Caco-2 (cell line): ENCODE measurements at regions of chr17 and their contacts with region 1.

Region 1: GRCh38 chr17:28717578-28718333 is at the start of gene RAB34:
- DNase-seq: peak in 1 of 2 experiments; percentile 58
- H3K4me3 ChIP-seq: no peak within 1 kb of the TSS
- H3K4me3 Mint-ChIP-seq: peak within 1 kb of the TSS; percentile 94
- H3K27ac Mint-ChIP-seq: peak within 1 kb of the TSS; percentile 98
- H3K4me1 ChIP-seq: peaks cover 19% of the 10 kb centered on the region
- H3K4me1 Mint-ChIP-seq: peaks cover 18% of the 10 kb centered on the region
- H3K27me3 ChIP-seq: no peaks in the 10 kb centered on the region
- H3K27me3 Mint-ChIP-seq: no peaks in the 10 kb centered on the region
- CTCF ChIP-seq: no peak
- total RNA-seq, gene RAB34: 1.2 and 1.8 TPM in 2 replicates

Region 2: DNA sequence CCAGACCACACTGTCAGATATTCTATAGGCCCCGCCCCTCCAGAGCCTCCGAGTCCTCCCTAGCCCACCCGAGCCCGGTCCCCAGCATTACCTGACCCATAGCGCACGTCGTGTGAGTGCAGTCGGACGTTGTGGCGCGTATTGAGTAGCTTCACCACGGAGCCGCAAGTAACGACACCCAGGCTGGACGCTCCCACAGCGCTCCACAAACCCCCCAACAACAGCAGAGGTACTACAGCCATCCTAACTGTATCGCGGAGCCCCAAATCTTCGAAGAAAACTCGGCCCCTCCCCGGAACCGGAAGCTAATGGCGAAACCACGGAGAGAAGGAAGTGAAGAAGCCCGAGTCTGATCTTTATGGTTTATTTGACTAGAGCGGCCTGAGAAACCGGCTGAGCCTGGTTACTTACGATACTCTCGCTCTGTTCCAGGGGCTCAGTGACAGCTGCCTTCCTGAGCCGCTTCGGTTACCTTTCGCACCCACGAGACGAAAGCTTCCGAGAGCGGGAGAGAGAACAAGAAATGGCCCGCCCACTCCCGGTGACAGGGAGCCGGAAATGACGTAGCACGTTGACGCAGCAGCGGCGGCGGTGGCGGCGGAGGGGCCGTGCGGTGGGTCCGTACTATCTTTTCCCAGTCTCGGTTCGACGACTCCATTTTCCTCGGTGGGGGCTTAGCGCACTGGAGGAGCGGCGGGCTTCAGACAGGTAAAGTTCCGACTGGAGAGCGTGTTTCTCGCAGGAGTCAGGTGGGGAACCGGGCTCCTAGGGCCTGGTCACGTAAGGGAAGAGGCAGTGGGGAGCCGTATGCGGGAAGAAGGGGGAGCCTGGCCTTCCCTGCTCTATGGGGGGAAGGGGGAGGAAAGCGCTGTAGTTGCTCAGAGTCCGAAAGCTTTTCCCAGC is 55.9 kb before region 1 on chr17 and contains the starts of genes SDF2 and SUPT6H:
- CTCF ChIA-PET with region 1: interaction called, 5 read pairs
- POLR2A ChIA-PET with region 1: interaction called, 27 read pairs
- intact Hi-C with region 1: no loop called
- DNase-seq: peak; percentile 91 to 94
- H3K4me3 ChIP-seq: peak within 1 kb of the TSS; percentile 80
- H3K4me3 Mint-ChIP-seq: peak within 1 kb of the TSS; percentile 89
- H3K27ac Mint-ChIP-seq: peak within 1 kb of the TSS; percentile 95
- H3K4me1 ChIP-seq: peaks cover 14% of the 10 kb centered on the region; the same call in 1 of the 2 replicates
- H3K4me1 Mint-ChIP-seq: peaks cover 31% of the 10 kb centered on the region
- H3K27me3 ChIP-seq: no peaks in the 10 kb centered on the region
- H3K27me3 Mint-ChIP-seq: no peaks in the 10 kb centered on the region
- CTCF ChIP-seq: no peak
- total RNA-seq, gene SDF2: 63.5 and 64.9 TPM in 2 replicates
- total RNA-seq, gene SUPT6H: 127 and 129 TPM in 2 replicates

Region 3: DNA sequence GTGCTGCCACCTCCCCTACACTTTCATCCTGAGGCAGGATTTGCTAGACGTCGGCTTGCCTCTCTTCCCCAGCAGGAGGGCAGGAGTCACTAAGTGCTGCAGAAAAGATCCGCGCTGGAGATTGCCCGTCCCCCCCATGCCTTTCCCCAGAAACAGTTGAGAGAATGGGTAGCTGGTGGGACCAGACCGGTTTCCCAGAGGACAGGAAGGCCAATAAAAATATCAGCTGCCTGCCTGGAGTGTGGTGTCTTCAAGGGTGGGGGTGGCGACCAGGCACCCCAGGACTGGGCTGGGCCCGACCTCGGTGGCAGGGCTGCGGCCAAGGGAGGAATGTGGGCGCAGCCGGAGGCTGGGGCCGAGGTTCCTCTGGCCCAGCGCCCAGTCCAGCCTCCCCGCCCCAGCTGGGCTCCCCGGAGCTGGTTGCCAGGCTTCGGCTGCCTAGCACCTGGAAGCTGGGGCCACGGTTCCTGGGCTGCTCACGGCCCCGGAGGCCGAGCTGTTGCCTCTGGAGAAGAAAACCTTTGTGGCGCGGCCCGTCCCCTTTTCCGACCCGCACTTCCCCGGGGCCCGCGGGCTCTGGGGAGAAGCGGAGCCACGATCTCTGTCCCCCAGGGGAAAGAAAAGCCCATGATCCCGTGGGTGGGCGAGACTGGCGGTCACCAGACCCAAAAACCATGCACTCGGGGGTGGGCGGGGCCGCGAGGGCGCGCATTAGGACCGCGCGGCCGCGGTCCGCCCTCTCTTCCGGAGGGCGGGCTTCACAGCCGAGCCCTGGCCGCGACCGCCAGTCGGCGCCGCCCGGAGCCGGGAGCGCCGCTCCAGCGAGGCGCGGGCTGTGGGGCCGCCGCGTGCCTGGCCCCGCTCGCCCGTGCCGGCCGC is 25.7 kb after region 1 on chr17 and contains the start of gene TRAF4:
- CTCF ChIA-PET with region 1: interaction called, 5 read pairs
- POLR2A ChIA-PET with region 1: interaction called, 52 read pairs
- intact Hi-C with region 1: no loop called
- DNase-seq: peak; percentile 83 to 91
- H3K4me3 ChIP-seq: peak within 1 kb of the TSS; percentile 68
- H3K4me3 Mint-ChIP-seq: peak within 1 kb of the TSS; percentile 95
- H3K27ac Mint-ChIP-seq: peak within 1 kb of the TSS; percentile 96
- H3K4me1 ChIP-seq: peaks cover 40% of the 10 kb centered on the region
- H3K4me1 Mint-ChIP-seq: peaks cover 12% of the 10 kb centered on the region
- H3K27me3 ChIP-seq: no peaks in the 10 kb centered on the region
- H3K27me3 Mint-ChIP-seq: no peaks in the 10 kb centered on the region
- CTCF ChIP-seq: peak in 1 of 2 experiments; percentile 18
- total RNA-seq, gene TRAF4: 140 and 154 TPM in 2 replicates

Region 4: DNA sequence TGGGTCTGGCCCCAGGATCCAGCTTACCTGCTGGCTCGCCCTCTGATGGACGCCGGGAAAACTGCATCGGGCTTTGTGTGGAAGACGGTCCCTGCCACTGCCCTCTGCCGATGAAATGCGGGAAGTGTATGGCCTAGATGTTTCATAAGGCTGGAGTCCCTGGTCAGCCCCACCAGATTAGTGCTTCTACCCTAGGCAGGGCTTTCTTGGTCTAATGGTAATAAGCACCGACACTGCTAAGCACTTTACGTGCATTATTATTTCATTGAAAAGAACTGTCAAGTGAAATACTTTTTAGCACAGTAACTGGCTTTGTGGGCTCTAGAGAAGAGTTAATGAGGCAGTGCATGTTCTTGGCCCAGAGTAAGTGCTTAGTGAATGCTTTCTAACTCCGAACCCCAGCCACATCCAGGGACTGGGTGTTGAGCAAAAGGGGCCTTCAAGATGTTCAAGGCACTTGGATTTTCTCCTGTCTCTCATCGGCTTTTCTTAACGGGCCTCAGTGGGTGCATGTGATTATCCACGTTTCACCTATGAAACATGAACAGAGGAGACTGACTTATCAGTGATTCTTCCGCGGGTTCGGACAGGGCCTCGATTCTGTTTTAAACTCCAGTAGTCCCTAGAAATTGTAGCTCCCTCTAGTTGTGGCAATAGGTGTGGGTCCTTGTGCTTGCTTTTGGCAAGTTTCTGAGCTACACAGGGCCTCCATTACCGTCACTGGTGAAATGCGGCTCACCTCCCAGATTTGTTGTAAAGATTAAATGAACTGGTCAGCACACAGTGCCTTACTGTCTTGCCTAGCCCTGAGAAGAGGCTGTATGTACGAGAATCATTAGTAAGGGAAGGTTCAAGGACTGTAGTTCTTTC is 32.7 kb after region 1 on chr17:
- CTCF ChIA-PET with region 1: interaction called, 16 read pairs
- POLR2A ChIA-PET with region 1: interaction called, 52 read pairs
- intact Hi-C with region 1: no loop called
- DNase-seq: peak; percentile 95 to 96
- H3K4me3 ChIP-seq: no peak overlapping the region
- H3K4me3 Mint-ChIP-seq: no peak overlapping the region
- H3K27ac Mint-ChIP-seq: no peak overlapping the region
- H3K4me1 ChIP-seq: peaks cover 28% of the 10 kb centered on the region
- H3K4me1 Mint-ChIP-seq: peaks cover 12% of the 10 kb centered on the region
- H3K27me3 ChIP-seq: no peaks in the 10 kb centered on the region
- H3K27me3 Mint-ChIP-seq: no peaks in the 10 kb centered on the region
- CTCF ChIP-seq: peak; percentile 99 to 100

Region 5: DNA sequence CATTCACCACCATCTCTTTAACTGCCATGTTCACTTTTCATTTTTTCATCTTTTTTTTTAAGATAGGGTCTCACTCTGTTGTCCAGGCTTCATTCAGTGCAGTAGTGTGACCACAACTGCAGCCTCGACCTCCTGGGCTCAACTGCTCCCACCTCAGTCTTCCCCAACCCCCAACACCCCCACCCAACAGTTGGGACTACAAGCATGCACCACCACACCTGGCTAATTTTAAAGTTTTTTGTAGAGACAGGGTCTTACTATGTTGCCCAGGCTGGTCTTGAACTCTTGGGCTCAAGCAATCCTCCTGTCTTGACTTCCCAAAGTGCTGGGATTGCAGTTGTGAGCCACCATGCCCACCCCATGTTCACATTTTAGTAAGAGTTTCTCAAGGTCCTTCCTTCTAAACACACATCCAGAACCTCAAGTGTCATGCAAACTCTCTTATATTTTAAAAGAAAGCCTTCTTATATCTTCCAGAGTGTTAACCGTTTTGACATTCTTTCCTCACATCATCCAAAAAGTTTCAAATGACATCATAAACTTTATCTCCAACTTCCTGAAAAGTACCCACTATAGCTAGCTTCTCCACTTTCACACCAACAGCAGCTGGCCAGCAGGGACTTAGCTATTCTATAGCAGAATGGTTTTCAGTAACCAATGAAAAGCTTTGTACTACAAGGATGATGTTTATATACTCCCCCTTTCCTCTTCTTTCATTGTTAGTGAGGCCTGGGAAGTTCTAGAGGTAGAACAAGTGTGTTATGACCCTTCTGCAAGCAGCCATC is 75.3 kb after region 1 on chr17:
- CTCF ChIA-PET with region 1: no interaction called
- POLR2A ChIA-PET with region 1: no interaction called
- intact Hi-C with region 1: no loop called
- DNase-seq: no peak
- H3K4me3 ChIP-seq: no peak overlapping the region
- H3K4me3 Mint-ChIP-seq: no peak overlapping the region
- H3K27ac Mint-ChIP-seq: no peak overlapping the region
- H3K4me1 ChIP-seq: no peaks in the 10 kb centered on the region
- H3K4me1 Mint-ChIP-seq: no peaks in the 10 kb centered on the region
- H3K27me3 ChIP-seq: no peaks in the 10 kb centered on the region
- H3K27me3 Mint-ChIP-seq: no peaks in the 10 kb centered on the region
- CTCF ChIP-seq: no peak